PC-3 (cell line): ENCODE measurements at regions of chr17 and their contacts with region 1.

Region 1: DNA sequence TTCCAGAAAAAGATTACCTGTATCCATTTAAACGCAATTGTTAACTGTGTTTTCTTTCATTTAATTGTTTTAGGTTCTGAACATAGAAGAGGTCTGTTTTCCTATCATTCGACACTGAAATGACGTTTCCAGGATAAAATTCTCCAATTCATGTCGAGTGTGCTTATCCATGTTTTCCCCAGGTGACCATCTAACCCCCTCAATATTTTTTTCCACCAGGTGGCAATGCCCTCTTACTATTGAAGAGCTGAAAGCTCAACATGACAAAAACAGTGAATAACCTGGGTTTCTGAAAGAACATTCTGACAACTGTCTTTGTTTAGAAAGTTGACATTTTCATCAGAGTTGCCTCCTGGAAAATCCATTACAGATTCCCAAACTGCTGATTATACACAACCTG is 948.7 kb downstream of the KCNJ2 start:
- DNase-seq: peak; percentile 89
- ATAC-seq: peak; percentile 58; the same call in 1 of the 2 replicates
- H3K4me3 ChIP-seq: no peak overlapping the region
- H3K27ac ChIP-seq: no peak overlapping the region
- H3K4me1 ChIP-seq: peaks cover 3% of the 10 kb centered on the region; the same call in 1 of the 2 replicates
- H3K27me3 ChIP-seq: no peaks in the 10 kb centered on the region
- CTCF ChIP-seq: peak; percentile 96

Region 2: DNA sequence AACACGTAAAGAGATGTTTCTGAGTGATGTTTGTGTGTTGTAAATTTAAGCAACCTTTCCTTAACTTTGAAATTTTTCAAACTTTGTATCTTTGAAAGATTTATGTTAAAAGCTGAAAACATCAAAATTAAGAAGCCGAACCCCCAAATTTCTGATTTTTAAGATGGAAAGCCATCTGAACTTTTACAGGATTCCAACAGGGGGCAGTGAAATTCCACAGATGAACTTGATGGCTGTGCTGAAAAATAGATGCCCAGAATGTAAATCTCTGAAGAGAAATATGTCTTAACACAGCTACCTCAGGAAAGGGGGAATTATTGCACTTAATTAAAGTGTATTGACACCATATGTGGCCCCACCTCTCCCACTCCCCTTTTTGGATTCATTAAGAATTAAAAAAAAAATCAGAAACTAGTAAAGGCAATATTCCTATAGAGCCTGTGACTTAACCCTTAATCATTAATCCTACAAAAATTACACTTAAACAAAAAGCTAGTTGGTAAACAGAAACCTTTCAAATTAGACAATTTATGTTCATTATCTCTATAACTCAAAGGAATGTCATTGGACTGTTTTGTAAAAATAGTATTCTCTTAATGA is 350.8 kb before region 1 on chr17:
- CTCF ChIA-PET with region 1: interaction called, 4 read pairs
- POLR2A ChIA-PET with region 1: no interaction called
- intact Hi-C with region 1: loop called (anchors 1 kb)
- DNase-seq: peak; percentile 57
- ATAC-seq: no peak
- H3K4me3 ChIP-seq: no peak overlapping the region
- H3K27ac ChIP-seq: no peak overlapping the region
- H3K4me1 ChIP-seq: no peaks in the 10 kb centered on the region
- H3K27me3 ChIP-seq: no peaks in the 10 kb centered on the region
- CTCF ChIP-seq: peak; percentile 96

Region 3: DNA sequence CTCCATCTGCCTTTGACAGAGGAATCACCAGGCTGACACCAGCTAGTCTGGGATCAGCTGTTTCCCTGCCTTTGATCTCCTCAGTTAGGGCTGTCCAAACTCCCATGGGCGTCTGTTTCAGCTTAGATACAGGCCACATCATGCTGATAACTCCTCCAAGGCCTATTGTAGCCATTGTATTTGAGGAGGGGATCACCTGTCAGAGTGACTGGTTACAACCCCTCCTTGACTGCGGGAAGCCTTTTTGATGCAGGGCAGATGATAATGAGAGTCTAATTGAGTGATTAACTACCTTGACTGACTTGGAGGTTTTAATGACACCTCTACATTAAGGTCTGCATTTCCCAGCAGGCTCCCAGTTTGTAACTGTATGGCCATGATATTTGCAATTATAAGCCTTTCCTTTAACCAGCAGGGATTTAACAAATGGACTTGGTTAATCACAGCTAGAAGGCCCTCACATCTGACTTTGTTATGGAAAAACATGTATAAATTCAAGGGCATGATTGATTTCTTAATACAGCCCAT is 85.2 kb before region 1 on chr17:
- CTCF ChIA-PET with region 1: no interaction called
- POLR2A ChIA-PET with region 1: no interaction called
- intact Hi-C with region 1: no loop called
- DNase-seq: no peak
- ATAC-seq: no peak
- H3K4me3 ChIP-seq: no peak overlapping the region
- H3K27ac ChIP-seq: no peak overlapping the region
- H3K4me1 ChIP-seq: no peaks in the 10 kb centered on the region
- H3K27me3 ChIP-seq: 0 out of 2 replicates have a peak, but pooled peaks cover 3% of the 10 kb centered on the region
- CTCF ChIP-seq: no peak

Region 4: DNA sequence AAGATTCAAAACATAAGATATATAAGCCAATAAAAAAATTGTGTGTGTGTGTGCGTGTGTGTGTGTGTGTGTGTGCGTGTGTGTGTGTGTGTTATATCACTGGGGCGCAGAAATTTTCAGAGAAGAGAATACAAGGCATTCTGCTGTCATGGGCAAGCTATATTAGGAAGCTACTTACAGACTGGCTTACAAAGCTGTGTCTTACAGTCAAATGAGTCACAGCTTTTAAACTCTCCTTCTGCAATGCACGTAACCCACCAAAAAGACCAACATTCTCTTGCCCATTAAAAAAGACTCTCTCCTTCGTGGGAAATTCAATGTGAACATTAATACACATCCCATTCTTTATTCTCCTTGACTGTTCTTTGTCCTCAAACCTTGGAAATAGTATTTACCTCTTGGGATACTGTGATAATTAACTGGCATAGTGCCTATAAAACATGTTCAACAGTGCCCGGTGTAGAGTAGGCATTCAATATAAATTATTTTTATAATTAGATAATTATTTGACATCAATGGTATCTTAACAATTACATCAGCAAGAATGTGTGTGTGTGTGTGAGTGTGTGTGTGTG is 142.4 kb after region 1 on chr17:
- CTCF ChIA-PET with region 1: no interaction called
- POLR2A ChIA-PET with region 1: no interaction called
- intact Hi-C with region 1: no loop called
- DNase-seq: peak; percentile 33
- ATAC-seq: peak; percentile 45
- H3K4me3 ChIP-seq: no peak overlapping the region
- H3K27ac ChIP-seq: no peak overlapping the region
- H3K4me1 ChIP-seq: no peaks in the 10 kb centered on the region
- H3K27me3 ChIP-seq: no peaks in the 10 kb centered on the region
- CTCF ChIP-seq: no peak

Region 5: DNA sequence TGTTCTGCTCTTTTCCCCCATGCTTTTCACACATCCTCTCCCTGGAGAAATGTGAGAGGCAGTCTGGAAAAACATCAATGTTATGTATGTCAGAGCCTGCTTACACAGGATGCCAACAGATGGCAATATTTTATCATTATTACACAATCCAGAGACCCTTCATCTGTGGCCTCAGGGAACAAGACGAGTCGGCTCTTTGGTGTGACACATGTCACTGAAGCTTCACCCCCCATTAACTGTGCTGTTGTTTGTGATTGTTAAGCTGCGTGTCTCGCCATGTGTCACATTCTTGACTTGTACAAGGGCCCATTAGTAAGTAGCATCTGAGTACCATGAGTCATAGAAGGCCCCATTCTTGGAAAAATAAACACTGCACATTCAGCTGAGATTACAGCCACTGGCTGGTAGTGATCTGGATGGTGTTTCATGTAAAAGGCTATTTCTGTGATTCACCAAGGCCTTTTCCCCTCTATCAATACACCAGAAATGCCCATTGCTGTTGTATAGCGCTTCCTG is 320.6 kb after region 1 on chr17:
- CTCF ChIA-PET with region 1: no interaction called
- POLR2A ChIA-PET with region 1: no interaction called
- intact Hi-C with region 1: loop called (anchors 10 kb)
- DNase-seq: peak; percentile 97
- ATAC-seq: peak; percentile 76
- H3K4me3 ChIP-seq: no peak overlapping the region
- H3K27ac ChIP-seq: peak overlapping the region; percentile 89
- H3K4me1 ChIP-seq: peaks cover 64% of the 10 kb centered on the region
- H3K27me3 ChIP-seq: no peaks in the 10 kb centered on the region
- CTCF ChIP-seq: peak; percentile 40

Region 6: GRCh38 chr17:71472809-71473789 is 355.1 kb after region 1 on chr17:
- CTCF ChIA-PET with region 1: interaction called, 7 read pairs
- POLR2A ChIA-PET with region 1: no interaction called
- intact Hi-C with region 1: loop called (anchors 1 kb)
- DNase-seq: peak; percentile 87
- ATAC-seq: peak; percentile 97
- H3K4me3 ChIP-seq: no peak overlapping the region
- H3K27ac ChIP-seq: no peak overlapping the region
- H3K4me1 ChIP-seq: peaks cover 13% of the 10 kb centered on the region
- H3K27me3 ChIP-seq: no peaks in the 10 kb centered on the region
- CTCF ChIP-seq: peak; percentile 95

Region 7: DNA sequence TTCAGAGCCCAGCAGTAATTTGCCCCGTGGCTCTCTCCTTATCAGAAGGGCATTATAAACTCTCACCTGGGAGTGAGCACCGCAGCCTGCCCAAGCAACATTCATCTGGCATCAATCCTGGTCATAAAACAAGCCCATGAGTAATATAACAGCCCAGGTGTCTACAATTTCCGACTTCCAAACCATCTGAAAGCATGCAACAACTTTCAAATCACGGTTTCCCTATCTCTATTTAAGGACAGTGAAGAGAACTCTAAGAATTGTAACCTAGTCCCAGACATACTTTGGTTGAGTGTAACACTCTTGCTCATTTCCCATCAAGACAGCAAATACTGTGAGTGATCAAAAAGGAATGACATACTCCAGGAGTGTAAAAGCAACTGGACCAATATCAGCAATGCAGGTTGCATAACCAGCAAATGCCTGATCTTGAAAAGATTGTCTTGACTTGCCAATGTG is 515.4 kb after region 1 on chr17:
- CTCF ChIA-PET with region 1: no interaction called
- POLR2A ChIA-PET with region 1: no interaction called
- intact Hi-C with region 1: loop called (anchors 10 kb)
- DNase-seq: peak; percentile 98
- ATAC-seq: peak; percentile 74
- H3K4me3 ChIP-seq: peak overlapping the region; percentile 32
- H3K27ac ChIP-seq: peak overlapping the region; percentile 62
- H3K4me1 ChIP-seq: peaks cover 41% of the 10 kb centered on the region
- H3K27me3 ChIP-seq: no peaks in the 10 kb centered on the region
- CTCF ChIP-seq: no peak

Region 8: GRCh38 chr17:72539981-72540897 is 1422.2 kb after region 1 on chr17:
- CTCF ChIA-PET with region 1: interaction called, 3 read pairs
- POLR2A ChIA-PET with region 1: no interaction called
- intact Hi-C with region 1: loop called (anchors 1 kb)
- DNase-seq: peak; percentile 90
- ATAC-seq: peak; percentile 98
- H3K4me3 ChIP-seq: peak overlapping the region; percentile 52
- H3K27ac ChIP-seq: peak overlapping the region; percentile 70
- H3K4me1 ChIP-seq: peaks cover 16% of the 10 kb centered on the region
- H3K27me3 ChIP-seq: no peaks in the 10 kb centered on the region
- CTCF ChIP-seq: peak; percentile 79